Cardiac septum (tissue), 1 donor: ENCODE measurements at regions of chr9 and their contacts with region 1.

Region 1: GRCh38 chr9:99563364-99563763 is 258.3 kb upstream of the NR4A3 start:
- DNase-seq: no peak

Region 2: GRCh38 chr9:99357575-99357974 is 205.8 kb before region 1 on chr9:
- intact Hi-C with region 1: loop called (anchors 2 kb)
- DNase-seq: peak; percentile 84

Region 3: DNA sequence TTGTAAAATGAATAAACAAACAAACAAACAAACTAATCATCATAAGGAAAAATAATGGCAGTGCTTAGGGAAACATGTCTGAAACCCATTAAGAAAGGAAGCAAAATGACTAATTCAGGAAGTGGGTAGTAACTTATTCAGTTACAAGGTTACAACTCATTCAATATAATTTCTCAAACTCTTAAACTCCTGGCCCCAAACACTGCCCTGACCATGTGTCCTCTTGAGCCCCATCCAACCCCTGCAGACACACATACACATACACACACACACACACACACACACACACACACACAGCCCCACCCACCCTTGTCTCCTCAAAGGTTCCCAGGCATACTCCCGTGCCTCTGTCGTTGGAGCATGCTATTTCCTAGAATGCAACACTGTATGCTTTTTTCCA is 147.4 kb before region 1 on chr9:
- intact Hi-C with region 1: no loop called
- DNase-seq: no peak

Region 4: DNA sequence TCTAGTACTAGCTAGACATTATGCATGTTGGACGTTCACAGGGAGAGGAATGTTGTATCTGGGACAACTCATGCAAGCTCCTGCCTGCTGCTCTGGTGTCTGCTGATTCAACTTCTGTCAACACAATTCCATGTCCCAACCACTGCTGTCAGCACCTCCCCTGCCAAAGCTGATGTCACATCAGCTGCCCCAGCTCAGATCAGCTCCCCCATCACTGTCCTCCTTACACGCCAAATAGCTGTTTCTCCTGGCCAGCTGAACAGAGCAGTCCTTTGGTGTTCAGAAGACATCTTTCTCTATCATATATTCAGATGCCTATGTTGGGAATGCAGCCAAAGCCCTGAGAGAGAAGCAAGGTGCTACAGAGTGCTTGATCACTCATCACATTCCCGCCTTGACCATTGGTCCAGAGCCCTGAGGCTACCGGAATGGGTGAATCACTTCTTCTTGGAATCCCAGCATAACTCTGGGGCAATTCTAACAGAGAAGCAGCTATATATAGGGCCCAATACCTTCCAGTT is 117.9 kb before region 1 on chr9:
- intact Hi-C with region 1: loop called (anchors 2 kb)
- DNase-seq: peak; percentile 90

Region 5: GRCh38 chr9:99478469-99479027 is 84.8 kb before region 1 on chr9:
- intact Hi-C with region 1: loop called (anchors 5 kb)
- DNase-seq: peak; percentile 80